Activated naive CD4-positive, alpha-beta T cell treated with anti-CD3 and anti-CD28 coated beads for 36 hours (primary cell): ENCODE measurements at regions of chr4 and their contacts with region 1.

Region 1: GRCh38 chr4:147096667-147097604 is 151.3 kb upstream of the TTC29 start:
- DNase-seq: no peak
- H3K4me3 Mint-ChIP-seq: no peak overlapping the region
- H3K27ac Mint-ChIP-seq: no peak overlapping the region
- H3K4me1 Mint-ChIP-seq: no peaks in the 10 kb centered on the region
- H3K27me3 Mint-ChIP-seq: peaks cover 8% of the 10 kb centered on the region

Region 2: DNA sequence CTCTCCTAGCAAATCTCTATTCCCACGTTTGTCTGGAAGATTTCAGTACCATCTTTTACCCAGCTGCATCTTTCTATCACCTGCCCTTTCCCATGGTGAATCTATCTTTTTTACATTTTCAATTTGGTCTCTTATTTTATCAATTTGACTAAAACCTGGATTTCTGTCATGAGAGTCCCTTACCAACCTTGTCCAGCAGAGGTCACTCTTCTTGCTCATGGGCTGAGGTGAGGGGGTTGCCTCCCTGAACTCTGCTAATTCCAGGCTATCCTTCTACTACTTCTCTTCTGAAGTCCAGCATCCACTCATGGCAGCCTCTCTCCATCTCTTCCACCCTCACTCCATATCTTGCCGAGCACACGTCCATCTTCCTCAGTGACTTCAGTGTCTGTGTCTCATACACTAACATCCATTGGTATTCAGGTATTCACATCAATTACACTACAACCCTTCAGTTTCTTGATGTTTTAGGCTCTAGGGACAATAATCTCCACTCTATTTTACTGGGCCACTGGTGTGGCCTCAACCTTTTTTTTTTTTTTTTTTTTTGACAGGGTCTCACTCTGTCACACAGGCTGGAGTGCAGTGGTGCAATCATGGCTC is 1140.5 kb before region 1 on chr4:
- CTCF ChIA-PET with region 1: no interaction called
- intact Hi-C with region 1: loop called (anchors 2 kb)
- DNase-seq: peak; percentile 41
- H3K4me3 Mint-ChIP-seq: no peak overlapping the region
- H3K27ac Mint-ChIP-seq: no peak overlapping the region
- H3K4me1 Mint-ChIP-seq: no peaks in the 10 kb centered on the region
- H3K27me3 Mint-ChIP-seq: no peaks in the 10 kb centered on the region

Region 3: DNA sequence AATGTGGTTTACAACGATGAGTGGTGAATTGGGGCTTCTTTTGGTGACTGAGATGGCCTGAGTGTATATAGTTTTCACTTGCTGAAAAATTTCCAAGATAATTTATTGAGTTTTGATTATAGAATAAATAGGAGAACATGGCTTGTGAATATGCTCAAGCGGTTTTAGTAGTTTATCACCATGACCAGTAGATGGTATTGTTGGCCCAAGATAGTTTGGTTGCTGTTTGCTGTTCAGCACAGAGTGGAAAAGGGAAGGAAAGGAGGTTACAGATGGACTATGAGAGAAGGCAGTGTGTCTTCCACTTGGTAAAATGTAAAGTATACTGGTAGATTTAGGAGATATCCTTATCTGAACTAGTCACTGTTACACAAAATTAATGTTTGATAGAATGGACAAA is 514.1 kb before region 1 on chr4:
- CTCF ChIA-PET with region 1: no interaction called
- intact Hi-C with region 1: no loop called
- DNase-seq: no peak
- H3K4me3 Mint-ChIP-seq: no peak overlapping the region
- H3K27ac Mint-ChIP-seq: no peak overlapping the region
- H3K4me1 Mint-ChIP-seq: no peaks in the 10 kb centered on the region
- H3K27me3 Mint-ChIP-seq: peaks cover 2% of the 10 kb centered on the region

Region 4: GRCh38 chr4:146945556-146946374 is 151.2 kb before region 1 on chr4 and contains the start of gene TTC29:
- CTCF ChIA-PET with region 1: no interaction called
- intact Hi-C with region 1: loop called (anchors 5 kb)
- DNase-seq: peak; percentile 92
- H3K4me3 Mint-ChIP-seq: peak within 1 kb of the TSS; percentile 71
- H3K27ac Mint-ChIP-seq: no peak within 1 kb of the TSS
- H3K4me1 Mint-ChIP-seq: peaks cover 26% of the 10 kb centered on the region
- H3K27me3 Mint-ChIP-seq: peaks cover 11% of the 10 kb centered on the region
- total RNA-seq, gene TTC29: not detected

Region 5: DNA sequence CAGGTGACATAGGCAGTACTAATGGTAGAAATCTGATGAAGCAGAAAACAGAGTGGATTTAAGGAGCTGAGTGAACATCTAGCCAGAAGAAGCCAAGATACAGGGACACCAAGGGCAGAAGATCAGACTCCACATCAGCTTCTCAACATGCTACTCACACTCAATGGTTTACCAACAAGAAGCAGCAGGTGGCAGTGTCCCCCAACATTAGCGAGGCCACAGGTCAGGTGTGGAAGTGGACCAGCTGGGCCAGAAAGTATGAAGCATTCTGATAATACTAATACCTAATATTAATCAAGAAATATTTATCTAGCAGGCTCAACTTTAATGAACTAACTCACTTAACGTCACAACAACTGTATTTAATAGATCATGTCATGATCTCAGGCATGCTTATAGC is 77.9 kb before region 1 on chr4:
- CTCF ChIA-PET with region 1: interaction called, 98 read pairs
- intact Hi-C with region 1: loop called (anchors 1 kb)
- DNase-seq: peak; percentile 77
- H3K4me3 Mint-ChIP-seq: no peak overlapping the region
- H3K27ac Mint-ChIP-seq: no peak overlapping the region
- H3K4me1 Mint-ChIP-seq: no peaks in the 10 kb centered on the region
- H3K27me3 Mint-ChIP-seq: peaks cover 11% of the 10 kb centered on the region

Region 6: DNA sequence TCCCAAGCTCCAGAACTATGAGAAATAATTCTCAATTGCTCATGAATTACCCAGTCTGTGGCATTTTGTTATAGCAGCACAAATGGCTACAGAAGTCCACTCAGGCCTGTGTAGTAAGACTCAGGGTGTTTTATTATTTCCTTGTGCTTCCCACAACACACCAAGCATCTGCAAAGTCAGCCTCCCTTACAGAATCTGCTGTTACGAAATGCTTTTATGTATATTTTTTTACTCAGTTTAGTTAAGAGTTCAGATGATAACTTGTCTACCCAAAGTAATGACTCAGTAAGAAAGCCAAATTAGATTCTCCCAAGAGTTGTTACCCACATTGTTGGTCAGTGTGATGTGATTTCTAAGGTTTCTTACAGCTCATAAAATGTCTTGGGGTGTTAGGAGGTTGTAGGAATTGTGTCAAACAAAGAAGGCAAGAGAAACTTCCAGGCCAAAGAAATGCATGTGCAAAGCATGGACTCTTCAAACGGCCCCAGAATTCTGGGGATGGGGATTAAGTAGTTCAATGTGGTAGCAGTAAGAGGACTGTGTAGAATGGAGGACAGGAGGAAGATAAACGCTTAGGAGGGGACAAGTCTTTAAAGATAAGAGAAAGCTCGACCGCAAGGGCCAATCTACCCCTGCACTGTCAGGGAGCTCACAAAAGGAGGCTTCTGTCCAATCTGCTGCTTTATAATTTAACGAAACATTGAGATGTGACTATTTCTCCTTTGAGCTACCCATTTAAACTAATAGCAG is 484.8 kb after region 1 on chr4:
- CTCF ChIA-PET with region 1: no interaction called
- intact Hi-C with region 1: loop called (anchors 5 kb)
- DNase-seq: no peak
- H3K4me3 Mint-ChIP-seq: no peak overlapping the region
- H3K27ac Mint-ChIP-seq: no peak overlapping the region
- H3K4me1 Mint-ChIP-seq: no peaks in the 10 kb centered on the region
- H3K27me3 Mint-ChIP-seq: peaks cover 5% of the 10 kb centered on the region